ENCODE measurements at regions of chr9 and their contacts with region 1.

Region 1: GRCh38 chr9:112379177-112380101 is 469 bp upstream of the HSDL2 start:
- DNase-seq: peak; percentile 98
- ATAC-seq: peak; percentile 97
- H3K4me3 Mint-ChIP-seq: peak overlapping the region; percentile 99
- H3K27ac Mint-ChIP-seq: peak overlapping the region; percentile 98
- H3K4me1 Mint-ChIP-seq: peaks cover 44% of the 10 kb centered on the region
- H3K27me3 Mint-ChIP-seq: no peaks in the 10 kb centered on the region

Region 2: DNA sequence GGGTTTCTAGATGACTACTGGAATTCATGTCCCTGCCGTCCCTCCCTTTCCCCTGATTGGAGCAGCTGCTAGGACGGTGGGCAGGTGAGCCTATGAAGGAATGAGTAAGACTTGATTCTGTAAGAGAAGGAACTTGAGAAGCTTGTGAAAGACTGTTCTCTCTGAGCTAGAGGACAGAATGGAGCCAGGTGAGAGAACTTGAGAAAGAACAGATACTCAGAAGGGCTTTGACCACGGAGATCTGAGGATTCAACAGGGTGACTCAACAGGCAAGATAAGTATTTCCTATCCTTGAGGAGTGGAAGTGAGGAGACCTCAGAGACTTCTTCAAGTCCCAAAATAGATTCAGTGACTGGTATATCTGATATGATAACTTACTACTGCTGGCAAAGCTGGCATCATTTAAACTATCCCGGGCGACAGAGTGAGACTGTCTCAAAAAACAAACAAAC is 42.4 kb after region 1 on chr9:
- POLR2A ChIA-PET with region 1: no interaction called
- DNase-seq: no peak
- ATAC-seq: no peak
- H3K4me3 Mint-ChIP-seq: no peak overlapping the region
- H3K27ac Mint-ChIP-seq: no peak overlapping the region
- H3K4me1 Mint-ChIP-seq: no peaks in the 10 kb centered on the region
- H3K27me3 Mint-ChIP-seq: no peaks in the 10 kb centered on the region

Region 3: GRCh38 chr9:112486221-112487007 is 107.0 kb after region 1 on chr9 and contains the start of gene KIAA1958:
- POLR2A ChIA-PET with region 1: interaction called, 26 read pairs
- DNase-seq: peak; percentile 92
- ATAC-seq: peak; percentile 90
- H3K4me3 Mint-ChIP-seq: peak within 1 kb of the TSS; percentile 98
- H3K27ac Mint-ChIP-seq: peak within 1 kb of the TSS; percentile 96
- H3K4me1 Mint-ChIP-seq: peaks cover 32% of the 10 kb centered on the region
- H3K27me3 Mint-ChIP-seq: no peaks in the 10 kb centered on the region
- total RNA-seq, gene KIAA1958: 13.3 to 15.0 TPM

Region 4: DNA sequence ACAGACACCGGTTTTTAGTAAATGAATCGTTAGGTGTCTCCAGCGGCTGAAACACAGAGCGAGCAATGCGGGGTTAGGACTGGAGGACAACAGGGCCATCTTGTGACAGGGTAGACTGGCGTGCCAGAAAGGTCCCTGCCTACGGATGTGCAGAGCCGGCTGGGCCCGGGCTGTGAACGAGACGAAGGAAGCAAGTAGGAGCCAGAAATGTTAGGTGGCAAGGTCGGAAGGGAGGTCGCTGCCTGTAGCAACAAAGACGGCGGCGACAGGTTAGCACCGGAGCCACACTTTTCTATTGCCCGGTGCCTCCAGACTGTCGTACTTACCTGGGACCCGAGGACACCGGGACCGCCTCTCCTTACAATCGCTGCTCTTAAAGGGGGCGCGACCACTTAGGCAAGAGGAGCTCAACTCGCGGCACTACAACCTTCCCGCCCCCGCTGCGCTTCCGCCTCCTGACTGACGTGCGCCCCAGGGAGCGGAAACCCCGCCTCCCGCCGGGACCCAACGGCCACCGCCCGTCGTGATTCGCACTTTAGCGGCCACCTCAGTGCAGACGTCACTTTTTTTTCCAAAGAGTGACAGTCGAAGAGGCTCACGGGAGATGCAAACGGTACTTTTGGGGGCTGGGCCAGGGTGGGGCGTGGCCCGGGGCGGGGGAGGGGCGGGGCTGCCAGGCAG is 338.4 kb after region 1 on chr9 and contains the start of gene INIP:
- POLR2A ChIA-PET with region 1: interaction called, 20 read pairs
- DNase-seq: peak; percentile 97
- ATAC-seq: peak; percentile 93
- H3K4me3 Mint-ChIP-seq: peak within 1 kb of the TSS; percentile 97
- H3K27ac Mint-ChIP-seq: peak within 1 kb of the TSS; percentile 95
- H3K4me1 Mint-ChIP-seq: peaks cover 26% of the 10 kb centered on the region
- H3K27me3 Mint-ChIP-seq: no peaks in the 10 kb centered on the region
- total RNA-seq, gene INIP: 29.4 to 29.8 TPM

Measured in activated naive CD8-positive, alpha-beta T cell treated with anti-CD3 and anti-CD28 coated beads, Interleukin-2, amount 10 ng/mL, durations not matched to agents 7 days and 5 days (primary cell).